ENCODE measurements at regions of chr21 and their contacts with region 1.

Region 1: DNA sequence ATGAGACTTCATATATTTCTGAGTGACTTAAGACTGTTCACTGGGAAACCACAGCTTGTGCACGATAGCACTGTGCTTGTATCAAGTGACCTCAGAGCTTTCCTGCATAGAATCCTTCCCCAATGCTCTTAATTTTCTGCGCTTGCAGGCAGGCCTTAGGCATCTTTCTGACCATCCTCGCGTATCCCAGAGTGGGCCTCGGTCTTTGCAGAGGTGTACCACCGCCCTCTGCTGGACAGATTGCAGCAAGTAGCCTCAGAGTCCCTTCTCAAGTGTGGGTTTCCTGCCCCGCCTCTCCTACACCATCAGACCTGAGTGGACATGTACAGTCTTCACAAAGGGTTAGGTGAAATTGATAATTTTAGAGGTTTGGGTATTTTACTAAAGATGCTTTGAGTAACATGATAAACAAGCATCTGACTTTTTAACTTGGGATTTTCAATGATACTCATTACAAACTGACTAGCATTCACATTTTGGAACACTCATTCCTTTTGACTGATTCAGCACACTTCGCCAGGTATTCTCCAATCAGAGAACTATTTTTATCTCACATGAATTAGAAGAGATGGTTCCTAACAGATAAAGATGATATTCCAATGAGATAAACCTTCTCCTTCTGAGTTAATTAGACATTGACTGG is 246.5 kb upstream of the USP25 start:
- DNase-seq: peak; percentile 54
- ATAC-seq: peak; percentile 99
- H3K4me3 Mint-ChIP-seq: no peak overlapping the region
- H3K27ac Mint-ChIP-seq: no peak overlapping the region
- H3K4me1 Mint-ChIP-seq: peaks cover 7% of the 10 kb centered on the region
- H3K27me3 Mint-ChIP-seq: no peaks in the 10 kb centered on the region
- CTCF ChIP-seq: no peak

Region 2: DNA sequence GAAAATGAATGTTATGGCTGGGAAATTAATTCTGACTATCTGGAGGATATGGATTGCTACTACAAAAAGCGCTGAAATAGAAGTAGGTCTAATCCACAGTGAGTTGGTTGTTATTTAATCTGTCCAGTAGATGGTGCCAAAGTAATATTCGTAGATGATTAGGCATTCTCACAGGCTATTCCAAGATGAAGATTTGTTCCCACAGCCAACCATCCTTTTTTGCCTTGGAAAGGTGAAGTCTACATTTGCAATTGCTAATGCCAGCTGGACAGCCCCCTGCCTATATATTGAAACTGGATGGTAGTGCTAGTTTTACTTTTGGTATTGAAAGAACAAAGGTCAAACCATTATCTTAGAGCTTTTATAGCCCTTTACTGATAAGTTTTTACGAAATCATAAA is 1223.5 kb before region 1 on chr21:
- CTCF ChIA-PET with region 1: interaction called, 7 read pairs
- POLR2A ChIA-PET with region 1: no interaction called
- intact Hi-C with region 1: loop called (anchors 1 kb)
- DNase-seq: no peak
- ATAC-seq: no peak
- H3K4me3 Mint-ChIP-seq: no peak overlapping the region
- H3K27ac Mint-ChIP-seq: no peak overlapping the region
- H3K4me1 Mint-ChIP-seq: no peaks in the 10 kb centered on the region
- H3K27me3 Mint-ChIP-seq: peaks cover 2% of the 10 kb centered on the region
- CTCF ChIP-seq: no peak

Region 3: GRCh38 chr21:14403681-14404318 is 1079.5 kb before region 1 on chr21:
- CTCF ChIA-PET with region 1: interaction called, 5 read pairs
- POLR2A ChIA-PET with region 1: no interaction called
- intact Hi-C with region 1: loop called (anchors 1 kb)
- DNase-seq: no peak
- ATAC-seq: peak; percentile 57
- H3K4me3 Mint-ChIP-seq: no peak overlapping the region
- H3K27ac Mint-ChIP-seq: no peak overlapping the region
- H3K4me1 Mint-ChIP-seq: no peaks in the 10 kb centered on the region
- H3K27me3 Mint-ChIP-seq: no peaks in the 10 kb centered on the region
- CTCF ChIP-seq: peak; percentile 77

Region 4: GRCh38 chr21:14864211-14865021 is 618.8 kb before region 1 on chr21:
- CTCF ChIA-PET with region 1: interaction called, 26 read pairs
- POLR2A ChIA-PET with region 1: no interaction called
- intact Hi-C with region 1: loop called (anchors 1 kb)
- DNase-seq: no peak
- ATAC-seq: peak; percentile 64
- H3K4me3 Mint-ChIP-seq: no peak overlapping the region
- H3K27ac Mint-ChIP-seq: no peak overlapping the region
- H3K4me1 Mint-ChIP-seq: peaks cover 49% of the 10 kb centered on the region
- H3K27me3 Mint-ChIP-seq: no peaks in the 10 kb centered on the region
- CTCF ChIP-seq: no peak

Region 5: DNA sequence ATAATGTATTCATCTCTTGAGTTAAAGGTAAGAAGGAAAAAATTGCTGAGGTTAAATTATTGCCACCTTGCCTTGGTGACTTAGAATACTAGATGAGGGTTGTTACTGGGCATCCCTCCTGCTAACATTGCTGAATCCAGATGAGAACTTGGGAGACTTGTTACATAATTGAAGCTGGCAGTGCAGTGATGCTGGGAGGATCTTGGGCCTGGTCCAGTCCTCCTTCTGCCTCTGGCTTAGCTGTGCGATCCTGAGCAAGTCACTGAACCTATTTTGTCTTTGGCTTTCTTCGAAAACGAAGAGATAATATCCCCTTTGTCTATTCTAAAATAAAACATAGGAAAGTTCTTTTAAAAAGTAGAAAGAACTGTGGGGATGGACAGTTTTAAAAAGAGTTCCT is 173.5 kb before region 1 on chr21:
- CTCF ChIA-PET with region 1: no interaction called
- POLR2A ChIA-PET with region 1: no interaction called
- intact Hi-C with region 1: no loop called
- DNase-seq: no peak
- ATAC-seq: no peak
- H3K4me3 Mint-ChIP-seq: no peak overlapping the region
- H3K27ac Mint-ChIP-seq: no peak overlapping the region
- H3K4me1 Mint-ChIP-seq: no peaks in the 10 kb centered on the region
- H3K27me3 Mint-ChIP-seq: peaks cover 5% of the 10 kb centered on the region
- CTCF ChIP-seq: no peak

Region 6: DNA sequence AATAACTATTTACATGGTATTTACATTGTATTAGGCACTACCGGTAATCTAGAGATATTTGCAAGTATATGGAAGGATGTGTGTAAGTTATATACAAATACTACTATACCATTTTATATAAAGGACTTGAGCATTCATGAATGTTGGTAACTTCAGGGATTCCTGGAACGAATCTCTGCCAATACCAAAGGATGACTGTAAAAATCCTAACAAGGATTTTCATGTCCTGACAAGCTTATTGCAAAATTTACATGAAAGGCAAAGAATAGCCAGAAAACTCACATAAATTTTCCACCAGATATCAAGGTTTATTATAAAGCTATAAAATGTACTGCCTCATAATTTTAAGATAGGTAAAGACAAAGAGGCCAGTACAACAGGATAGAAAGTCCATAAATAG is 93.2 kb before region 1 on chr21:
- CTCF ChIA-PET with region 1: no interaction called
- POLR2A ChIA-PET with region 1: no interaction called
- intact Hi-C with region 1: no loop called
- DNase-seq: no peak
- ATAC-seq: no peak
- H3K4me3 Mint-ChIP-seq: no peak overlapping the region
- H3K27ac Mint-ChIP-seq: no peak overlapping the region
- H3K4me1 Mint-ChIP-seq: no peaks in the 10 kb centered on the region
- H3K27me3 Mint-ChIP-seq: peaks cover 2% of the 10 kb centered on the region
- CTCF ChIP-seq: no peak

Region 7: DNA sequence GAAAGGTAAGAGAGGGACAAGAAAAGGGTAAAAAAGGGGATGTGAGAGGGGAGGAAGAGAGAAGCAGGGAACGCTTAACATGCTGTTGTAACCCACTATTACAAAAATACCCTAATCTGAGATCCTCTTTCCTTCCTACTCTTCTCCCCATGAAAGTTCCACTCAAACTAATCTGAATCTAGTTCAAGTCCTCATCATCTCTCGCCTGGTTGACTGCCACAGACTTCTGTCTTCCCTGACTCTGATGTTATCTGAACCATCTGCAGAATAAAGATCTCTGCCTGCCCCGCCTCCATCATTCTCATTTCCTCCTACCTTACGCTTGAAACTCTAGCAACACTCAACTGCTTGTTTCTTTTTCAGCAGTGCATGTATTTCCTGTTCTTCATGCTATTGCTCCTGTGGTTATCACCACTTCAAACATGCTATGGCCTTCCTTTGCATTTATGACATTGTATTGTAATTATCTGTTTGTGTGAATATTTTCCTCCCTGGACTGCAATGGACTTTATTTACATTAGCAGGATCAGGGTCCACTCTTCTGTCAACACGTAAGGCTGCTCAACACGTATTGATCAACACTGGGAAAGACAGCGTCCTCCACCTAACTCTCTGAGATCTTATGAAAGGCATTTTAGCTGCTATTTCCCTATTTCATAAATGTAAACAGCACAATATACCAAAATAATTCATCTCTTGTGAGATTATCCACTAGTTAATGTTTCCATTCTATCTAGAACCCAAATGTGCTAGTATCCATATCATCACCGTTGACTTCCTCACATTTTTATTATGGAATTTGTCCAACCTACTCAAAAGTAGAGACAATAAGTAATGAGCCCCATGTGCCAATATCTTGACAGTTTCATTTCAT is 31.1 kb after region 1 on chr21:
- CTCF ChIA-PET with region 1: interaction called, 4 read pairs
- POLR2A ChIA-PET with region 1: no interaction called
- intact Hi-C with region 1: loop called (anchors 1 kb)
- DNase-seq: peak; percentile 15
- ATAC-seq: peak; percentile 97
- H3K4me3 Mint-ChIP-seq: peak overlapping the region; percentile 3
- H3K27ac Mint-ChIP-seq: peak overlapping the region; percentile 69
- H3K4me1 Mint-ChIP-seq: peaks cover 18% of the 10 kb centered on the region
- H3K27me3 Mint-ChIP-seq: no peaks in the 10 kb centered on the region
- CTCF ChIP-seq: no peak

Measured in activated B cell treated with CpG ODN at 0.5 μM for 24 hours (primary cell).